ENCODE measurements at regions of chr1 and their contacts with region 1.

Region 1: GRCh38 chr1:193183019-193183627 is 3.3 kb downstream of the B3GALT2 start:
- DNase-seq: no peak
- H3K4me3 ChIP-seq: no peak overlapping the region
- H3K27ac ChIP-seq: no peak overlapping the region
- H3K4me1 ChIP-seq: peaks cover 5% of the 10 kb centered on the region; the same call in 1 of the 2 replicates
- H3K27me3 ChIP-seq: no peaks in the 10 kb centered on the region
- CTCF ChIP-seq: peak; percentile 83

Region 2: GRCh38 chr1:193221651-193222050 is 38.5 kb after region 1 on chr1:
- CTCF ChIA-PET with region 1: no interaction called
- POLR2A ChIA-PET with region 1: no interaction called
- intact Hi-C with region 1: no loop called
- DNase-seq: no peak
- H3K4me3 ChIP-seq: no peak overlapping the region
- H3K27ac ChIP-seq: no peak overlapping the region
- H3K4me1 ChIP-seq: no peaks in the 10 kb centered on the region
- H3K27me3 ChIP-seq: no peaks in the 10 kb centered on the region
- CTCF ChIP-seq: no peak

Region 3: GRCh38 chr1:193338194-193338593 is 155.1 kb after region 1 on chr1:
- CTCF ChIA-PET with region 1: no interaction called
- POLR2A ChIA-PET with region 1: no interaction called
- intact Hi-C with region 1: loop called (anchors 5 kb)
- DNase-seq: no peak
- H3K4me3 ChIP-seq: no peak overlapping the region
- H3K27ac ChIP-seq: no peak overlapping the region
- H3K4me1 ChIP-seq: no peaks in the 10 kb centered on the region
- H3K27me3 ChIP-seq: no peaks in the 10 kb centered on the region
- CTCF ChIP-seq: no peak

Region 4: DNA sequence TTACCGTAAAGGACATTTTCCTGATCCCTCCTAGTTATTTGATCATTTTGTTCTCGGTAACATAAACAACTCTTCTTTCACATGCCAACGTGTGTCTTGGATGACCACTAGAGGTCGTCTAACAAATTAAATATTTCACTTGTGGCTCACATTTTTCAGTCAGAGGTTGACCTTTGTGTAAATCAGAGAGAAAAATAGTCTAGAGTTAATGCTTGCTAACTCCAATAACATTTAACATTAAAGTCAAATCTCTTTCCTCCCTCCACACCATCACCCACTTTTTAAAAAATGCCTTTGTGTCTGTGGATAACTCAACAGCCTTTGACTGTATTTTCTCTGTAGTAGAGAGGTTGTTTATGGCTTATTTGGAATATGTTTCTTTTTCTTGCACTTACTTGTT is 223.8 kb after region 1 on chr1:
- CTCF ChIA-PET with region 1: no interaction called
- POLR2A ChIA-PET with region 1: no interaction called
- intact Hi-C with region 1: loop called (anchors 10 kb)
- DNase-seq: no peak
- H3K4me3 ChIP-seq: no peak overlapping the region
- H3K27ac ChIP-seq: no peak overlapping the region
- H3K4me1 ChIP-seq: no peaks in the 10 kb centered on the region
- H3K27me3 ChIP-seq: no peaks in the 10 kb centered on the region
- CTCF ChIP-seq: peak; percentile 72

Region 5: DNA sequence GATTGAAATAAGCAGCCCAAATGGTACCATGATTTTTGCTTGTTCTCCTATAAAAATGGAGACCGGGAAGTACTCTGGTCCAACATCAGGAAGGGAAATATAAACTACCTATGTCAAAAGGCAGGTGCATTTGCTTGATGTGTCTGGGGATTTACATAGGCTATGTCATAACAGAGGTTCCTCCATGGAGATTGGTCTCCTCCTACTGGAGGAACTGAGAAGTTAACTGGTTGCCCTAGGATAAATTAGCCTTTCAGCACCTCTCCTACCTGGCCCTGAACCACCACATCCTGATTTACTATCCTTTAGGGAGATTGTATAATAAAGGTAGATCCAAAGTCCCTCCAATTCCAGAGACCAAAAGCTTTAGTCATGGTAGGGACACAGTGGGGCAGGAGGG is 1112.6 kb after region 1 on chr1:
- CTCF ChIA-PET with region 1: no interaction called
- POLR2A ChIA-PET with region 1: no interaction called
- intact Hi-C with region 1: loop called (anchors 5 kb)
- DNase-seq: peak in 1 of 2 experiments; percentile 3
- H3K4me3 ChIP-seq: no peak overlapping the region
- H3K27ac ChIP-seq: no peak overlapping the region
- H3K4me1 ChIP-seq: no peaks in the 10 kb centered on the region
- H3K27me3 ChIP-seq: no peaks in the 10 kb centered on the region
- CTCF ChIP-seq: peak; percentile 55